ENCODE measurements at regions of chr3 and their contacts with region 1.

Region 1: DNA sequence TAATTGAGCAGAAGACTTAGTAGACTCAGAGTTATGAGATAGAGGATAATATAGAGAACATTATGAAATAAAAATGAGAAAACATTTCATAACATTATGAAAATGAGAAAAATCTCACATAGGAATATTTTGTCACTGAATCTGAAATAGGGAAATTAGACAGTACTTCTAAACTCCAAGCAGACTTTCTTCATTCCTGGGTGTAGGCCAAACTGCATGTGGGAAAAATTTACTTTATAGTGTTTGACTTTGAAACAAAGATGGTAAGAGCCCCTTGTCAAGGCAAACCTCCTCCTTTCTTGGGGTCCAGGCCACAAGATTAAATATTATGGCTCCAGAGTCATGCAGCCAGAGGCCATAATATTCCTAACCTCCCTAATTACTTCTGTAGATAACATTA is 6.7 kb upstream of the OR5H14 start:
- DNase-seq: no peak
- H3K4me3 ChIP-seq: no peak overlapping the region
- H3K27ac ChIP-seq: no peak overlapping the region
- H3K4me1 ChIP-seq: no peaks in the 10 kb centered on the region
- H3K27me3 ChIP-seq: no peaks in the 10 kb centered on the region
- CTCF ChIP-seq: no peak
- POLR2A ChIP-seq: no peak

Region 2: DNA sequence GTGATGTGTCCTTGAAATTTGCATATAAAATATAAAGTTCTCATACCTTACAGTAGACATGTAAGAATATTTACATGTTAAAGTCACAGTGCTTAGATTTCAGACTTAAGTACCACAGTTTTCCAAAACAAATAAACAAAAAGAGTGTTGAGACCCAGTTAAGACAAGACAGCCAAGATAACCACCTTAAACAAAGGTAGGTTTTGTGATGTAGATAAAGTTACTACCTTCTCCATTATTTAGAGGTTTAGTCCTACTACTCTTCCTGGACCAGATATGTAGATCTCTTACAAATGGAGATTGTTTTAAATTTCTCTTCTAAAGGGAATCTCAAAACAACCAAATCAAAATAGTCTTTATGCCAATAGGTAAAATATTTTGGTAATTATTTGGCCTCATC is 41.7 kb after region 1 on chr3:
- intact Hi-C with region 1: loop called (anchors 2 kb)
- DNase-seq: no peak
- H3K4me3 ChIP-seq: no peak overlapping the region
- H3K27ac ChIP-seq: no peak overlapping the region
- H3K4me1 ChIP-seq: no peaks in the 10 kb centered on the region
- H3K27me3 ChIP-seq: no peaks in the 10 kb centered on the region
- CTCF ChIP-seq: no peak
- POLR2A ChIP-seq: no peak